PC-3 (cell line): ENCODE measurements at regions of chr1 and their contacts with region 1.

Region 1: GRCh38 chr1:197399755-197400527 is 131.9 kb downstream of the CRB1 start:
- DNase-seq: peak; percentile 71
- ATAC-seq: peak; percentile 22; the same call in 1 of the 2 replicates
- H3K4me3 ChIP-seq: no peak overlapping the region
- H3K27ac ChIP-seq: no peak overlapping the region
- H3K4me1 ChIP-seq: no peaks in the 10 kb centered on the region
- H3K27me3 ChIP-seq: no peaks in the 10 kb centered on the region
- CTCF ChIP-seq: peak; percentile 63

Region 2: DNA sequence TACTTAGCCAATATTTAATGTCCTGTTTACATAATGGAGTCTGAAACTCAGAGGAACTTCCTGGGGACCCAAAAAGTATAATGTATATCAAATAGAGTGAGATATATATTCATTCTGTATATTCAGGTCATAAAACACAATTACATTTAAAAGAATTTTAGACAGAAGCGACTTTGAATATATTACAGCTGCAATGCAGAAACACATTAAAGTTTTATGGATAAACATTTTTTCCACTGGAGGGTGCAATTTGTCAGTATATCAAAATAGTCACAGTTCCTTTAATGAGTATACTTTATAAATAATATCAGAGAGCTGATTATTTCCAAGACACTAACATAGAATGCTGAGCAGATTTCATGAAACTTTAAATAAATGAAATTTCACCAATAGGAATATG is 175.8 kb before region 1 on chr1:
- CTCF ChIA-PET with region 1: interaction called, 11 read pairs
- POLR2A ChIA-PET with region 1: no interaction called
- intact Hi-C with region 1: no loop called
- DNase-seq: peak; percentile 51
- ATAC-seq: no peak
- H3K4me3 ChIP-seq: no peak overlapping the region
- H3K27ac ChIP-seq: no peak overlapping the region
- H3K4me1 ChIP-seq: peaks cover 8% of the 10 kb centered on the region
- H3K27me3 ChIP-seq: no peaks in the 10 kb centered on the region
- CTCF ChIP-seq: peak; percentile 57

Region 3: DNA sequence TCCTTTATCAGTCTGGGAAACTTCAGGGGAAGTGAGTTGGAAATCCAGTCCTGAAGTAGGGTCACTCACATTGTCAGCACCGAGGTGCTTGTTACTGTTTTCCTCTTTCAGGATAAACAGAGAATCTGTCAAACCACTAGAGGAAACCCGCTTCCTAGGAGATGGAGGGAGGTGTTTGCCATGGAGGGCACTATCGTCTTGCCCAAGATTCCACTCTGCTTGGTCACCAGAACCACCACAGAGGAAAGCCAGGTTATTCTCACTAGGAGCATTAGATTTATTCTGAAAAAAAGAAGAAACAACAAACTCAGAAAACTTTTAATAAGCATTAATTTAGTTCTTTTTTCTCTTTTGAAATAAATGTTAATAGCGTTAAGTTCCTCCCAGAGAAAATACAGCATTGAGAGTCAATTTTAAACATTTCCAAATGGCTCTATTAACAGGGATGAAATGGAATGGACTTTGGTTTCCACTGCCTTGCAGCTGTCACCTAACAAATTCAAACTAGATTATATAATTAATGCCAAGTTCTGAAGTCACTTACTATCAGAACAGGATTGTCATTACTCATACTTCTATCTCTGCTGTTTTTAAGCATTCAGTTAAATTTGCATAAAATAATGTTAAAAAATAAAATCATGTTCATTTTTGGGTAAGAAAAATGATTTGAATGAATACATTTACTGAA is 110.9 kb after region 1 on chr1:
- CTCF ChIA-PET with region 1: no interaction called
- POLR2A ChIA-PET with region 1: interaction called, 3 read pairs
- intact Hi-C with region 1: loop called (anchors 10 kb)
- DNase-seq: no peak
- ATAC-seq: no peak
- H3K4me3 ChIP-seq: no peak overlapping the region
- H3K27ac ChIP-seq: no peak overlapping the region
- H3K4me1 ChIP-seq: no peaks in the 10 kb centered on the region
- H3K27me3 ChIP-seq: no peaks in the 10 kb centered on the region
- CTCF ChIP-seq: no peak

Region 4: DNA sequence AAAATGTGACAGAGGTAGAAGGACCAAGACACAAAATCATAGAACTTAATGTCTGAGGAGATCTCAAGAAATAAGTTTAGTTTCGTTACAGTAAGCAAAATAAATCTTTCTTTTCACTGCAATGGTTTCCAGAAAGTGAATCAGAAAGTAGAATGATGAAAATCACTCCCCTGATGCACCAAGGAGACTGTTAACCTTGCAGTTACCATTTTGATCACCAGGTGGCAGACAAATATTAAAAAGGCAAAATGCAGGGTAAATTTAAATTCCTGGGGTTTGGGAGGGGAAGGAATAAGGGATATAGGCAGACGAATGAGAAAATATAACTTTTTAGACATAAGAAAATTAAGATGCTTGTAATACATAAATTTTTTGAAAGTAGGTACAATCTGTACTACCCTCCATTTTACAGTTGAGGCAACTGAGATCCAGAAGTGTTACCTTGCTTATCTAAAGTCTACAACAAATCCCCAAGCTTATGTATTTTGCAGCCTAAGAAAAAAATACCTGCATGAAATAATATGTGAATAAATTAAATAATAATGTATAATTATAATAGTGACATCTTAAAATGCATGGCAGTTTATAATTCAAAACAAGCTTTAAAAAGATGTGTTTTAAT is 121.3 kb after region 1 on chr1:
- CTCF ChIA-PET with region 1: interaction called, 11 read pairs
- POLR2A ChIA-PET with region 1: no interaction called
- intact Hi-C with region 1: loop called (anchors 2 kb)
- DNase-seq: peak; percentile 60
- ATAC-seq: 0 out of 2 replicates have a peak, but pooled peaks have one; percentile 27
- H3K4me3 ChIP-seq: no peak overlapping the region
- H3K27ac ChIP-seq: no peak overlapping the region
- H3K4me1 ChIP-seq: no peaks in the 10 kb centered on the region
- H3K27me3 ChIP-seq: no peaks in the 10 kb centered on the region
- CTCF ChIP-seq: peak; percentile 72

Region 5: GRCh38 chr1:197924516-197925123 is 524.7 kb after region 1 on chr1:
- CTCF ChIA-PET with region 1: no interaction called
- POLR2A ChIA-PET with region 1: no interaction called
- intact Hi-C with region 1: loop called (anchors 10 kb)
- DNase-seq: peak; percentile 68
- ATAC-seq: peak; percentile 76
- H3K4me3 ChIP-seq: no peak overlapping the region
- H3K27ac ChIP-seq: no peak overlapping the region
- H3K4me1 ChIP-seq: no peaks in the 10 kb centered on the region
- H3K27me3 ChIP-seq: no peaks in the 10 kb centered on the region
- CTCF ChIP-seq: peak; percentile 72